B cell (primary cell): ENCODE measurements at regions of chr5 and their contacts with region 1.

Region 1: DNA sequence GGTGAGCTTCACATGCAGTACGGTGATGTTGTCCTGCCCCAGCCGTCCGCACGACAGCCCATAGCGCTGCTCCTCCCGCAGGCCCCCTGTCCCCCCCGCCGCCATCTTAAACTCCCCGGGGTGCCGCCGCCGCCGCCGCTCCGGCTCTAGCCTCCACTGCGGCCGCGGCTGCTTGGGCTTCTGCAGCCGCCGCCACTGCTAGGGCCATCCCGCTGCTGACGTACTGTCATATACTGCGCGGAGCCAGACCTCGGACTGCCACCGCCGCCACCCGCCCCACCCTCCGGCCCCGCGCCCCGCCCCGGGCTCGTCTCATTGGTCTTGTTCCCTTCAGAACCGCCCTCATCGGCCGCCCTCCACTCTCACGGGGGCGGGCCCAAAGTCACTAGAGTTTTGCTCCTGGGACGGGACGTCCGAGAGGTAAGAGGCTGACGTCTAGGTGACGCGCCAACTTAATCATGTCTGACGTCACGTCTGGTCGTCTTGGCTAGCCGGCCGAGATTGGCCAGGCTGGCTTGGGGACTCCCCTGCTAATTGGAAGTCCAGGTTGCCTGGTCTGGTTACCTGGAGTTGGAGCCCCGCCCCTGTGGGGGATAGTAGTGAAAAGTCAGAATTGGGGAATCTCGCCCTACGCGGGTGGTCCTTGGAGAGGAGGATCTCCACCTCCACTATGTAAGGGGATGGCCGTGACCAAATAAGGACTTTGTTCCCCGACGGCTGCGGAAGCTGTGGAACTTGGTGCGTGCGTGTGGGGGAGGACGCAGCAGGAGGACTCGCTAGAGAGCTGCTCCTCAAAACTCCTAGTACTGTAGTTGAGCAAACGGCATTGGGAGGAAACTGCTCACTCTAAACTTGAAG is at the start of gene ELL2:
- DNase-seq: peak; percentile 99
- ATAC-seq: peak; percentile 81
- H3K4me3 ChIP-seq: peak within 1 kb of the TSS; percentile 91 to 98 (median 92)
- H3K4me3 Mint-ChIP-seq: peak within 1 kb of the TSS; percentile 99
- H3K27ac ChIP-seq: peak within 1 kb of the TSS; percentile 92 to 99
- H3K27ac Mint-ChIP-seq: peak within 1 kb of the TSS; percentile 97
- H3K4me1 ChIP-seq: peaks cover 21 to 36% of the 10 kb centered on the region in 2 donors
- H3K4me1 Mint-ChIP-seq: peaks cover 47% of the 10 kb centered on the region
- H3K27me3 ChIP-seq: no peaks in the 10 kb centered on the region
- H3K27me3 Mint-ChIP-seq: peaks cover 2% of the 10 kb centered on the region
- CTCF ChIP-seq: no peak
- total RNA-seq, gene ELL2: 27.0 and 31.6 TPM in 2 replicates

Region 2: GRCh38 chr5:95554647-95555548 is 406.9 kb before region 1 on chr5 and contains the starts of genes ARSK and SKIC3:
- CTCF ChIA-PET with region 1: no interaction called
- POLR2A ChIA-PET with region 1: no interaction called
- intact Hi-C with region 1: loop called (anchors 2 kb)
- DNase-seq: peak; percentile 99
- ATAC-seq: peak; percentile 85
- H3K4me3 ChIP-seq: peak within 1 kb of the TSS; percentile 70 to 91 (median 81)
- H3K4me3 Mint-ChIP-seq: peak within 1 kb of the TSS; percentile 93
- H3K27ac ChIP-seq: peak within 1 kb of the TSS; percentile 71 to 80
- H3K27ac Mint-ChIP-seq: peak within 1 kb of the TSS; percentile 90
- H3K4me1 ChIP-seq: peaks cover 14 to 20% of the 10 kb centered on the region in 2 donors
- H3K4me1 Mint-ChIP-seq: peaks cover 41% of the 10 kb centered on the region
- H3K27me3 ChIP-seq: no peaks in the 10 kb centered on the region
- H3K27me3 Mint-ChIP-seq: no peaks in the 10 kb centered on the region
- CTCF ChIP-seq: peak; percentile 29
- total RNA-seq, gene ARSK: 5.1 and 5.5 TPM in 2 replicates
- total RNA-seq, gene SKIC3: 75.4 and 85.3 TPM in 2 replicates

Region 3: GRCh38 chr5:95730730-95731570 is 230.9 kb before region 1 on chr5 and contains the start of gene RHOBTB3:
- CTCF ChIA-PET with region 1: interaction called, 3 read pairs
- POLR2A ChIA-PET with region 1: no interaction called
- intact Hi-C with region 1: loop called (anchors 2 kb)
- DNase-seq: peak; percentile 61
- ATAC-seq: peak; percentile 70
- H3K4me3 ChIP-seq: peak within 1 kb of the TSS; percentile 51 to 75 (median 60)
- H3K4me3 Mint-ChIP-seq: peak within 1 kb of the TSS; percentile 90
- H3K27ac ChIP-seq: no peak within 1 kb of the TSS
- H3K27ac Mint-ChIP-seq: peak within 1 kb of the TSS; percentile 78
- H3K4me1 ChIP-seq: peaks cover 8 to 13% of the 10 kb centered on the region in 2 donors
- H3K4me1 Mint-ChIP-seq: peaks cover 29% of the 10 kb centered on the region
- H3K27me3 ChIP-seq: peaks cover 0 to 10% (median 6%) of the 10 kb centered on the region in 4 experiments
- H3K27me3 Mint-ChIP-seq: peaks cover 12% of the 10 kb centered on the region
- CTCF ChIP-seq: no peak
- total RNA-seq, gene RHOBTB3: 5.0 and 5.3 TPM in 2 replicates

Region 4: DNA sequence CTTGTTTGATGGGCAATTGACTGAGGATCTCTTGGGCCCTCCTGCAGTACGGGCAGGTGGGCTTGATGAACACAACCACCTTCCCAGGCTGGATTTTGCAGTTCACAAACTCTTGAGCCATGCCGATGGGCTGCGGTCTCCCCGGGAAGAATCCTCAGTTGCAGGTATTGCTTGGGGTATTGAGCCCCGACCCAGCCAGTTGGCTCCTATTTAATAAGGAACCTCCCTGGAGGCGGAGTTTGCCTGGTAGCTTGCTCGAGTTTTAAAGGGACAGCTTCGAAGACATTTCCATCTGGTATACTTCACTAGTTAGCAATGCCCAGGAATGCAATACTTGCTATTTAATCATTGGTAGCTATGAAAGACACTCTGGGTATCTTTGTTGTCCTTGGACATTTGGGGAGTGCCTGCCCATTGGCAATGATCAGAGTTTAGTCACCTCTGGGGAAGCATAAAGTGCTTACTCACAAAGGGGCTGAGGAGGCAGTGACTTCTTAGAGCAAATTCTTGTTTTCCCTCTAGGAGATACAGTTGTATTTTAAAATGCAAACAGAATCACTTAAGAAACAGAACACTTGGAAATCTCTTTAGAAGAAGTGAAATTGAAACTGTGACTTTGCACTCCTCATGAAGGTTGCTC is 139.2 kb before region 1 on chr5 and contains the start of gene GLRX:
- CTCF ChIA-PET with region 1: no interaction called
- POLR2A ChIA-PET with region 1: interaction called, 3 read pairs
- intact Hi-C with region 1: loop called (anchors 5 kb)
- DNase-seq: peak; percentile 63
- ATAC-seq: peak; percentile 41
- H3K4me3 ChIP-seq: peak within 1 kb of the TSS; percentile 70 to 100 (median 97)
- H3K4me3 Mint-ChIP-seq: peak within 1 kb of the TSS; percentile 99
- H3K27ac ChIP-seq: peak within 1 kb of the TSS; percentile 67 to 90
- H3K27ac Mint-ChIP-seq: peak within 1 kb of the TSS; percentile 99
- H3K4me1 ChIP-seq: peaks cover 52 to 59% of the 10 kb centered on the region in 2 donors
- H3K4me1 Mint-ChIP-seq: peaks cover 70% of the 10 kb centered on the region
- H3K27me3 ChIP-seq: no peaks in the 10 kb centered on the region
- H3K27me3 Mint-ChIP-seq: no peaks in the 10 kb centered on the region
- CTCF ChIP-seq: no peak
- total RNA-seq, gene GLRX: 44.6 and 50.0 TPM in 2 replicates

Region 5: GRCh38 chr5:95932941-95933340 is 28.9 kb before region 1 on chr5:
- CTCF ChIA-PET with region 1: no interaction called
- POLR2A ChIA-PET with region 1: interaction called, 5 read pairs
- intact Hi-C with region 1: loop called (anchors 1 kb)
- DNase-seq: no peak
- ATAC-seq: no peak
- H3K4me3 ChIP-seq: no peak overlapping the region
- H3K4me3 Mint-ChIP-seq: no peak overlapping the region
- H3K27ac ChIP-seq: no peak overlapping the region
- H3K27ac Mint-ChIP-seq: no peak overlapping the region
- H3K4me1 ChIP-seq: peaks cover 4 to 7% of the 10 kb centered on the region in 2 donors
- H3K4me1 Mint-ChIP-seq: peaks cover 16% of the 10 kb centered on the region
- H3K27me3 ChIP-seq: no peaks in the 10 kb centered on the region
- H3K27me3 Mint-ChIP-seq: no peaks in the 10 kb centered on the region
- CTCF ChIP-seq: no peak

Region 6: DNA sequence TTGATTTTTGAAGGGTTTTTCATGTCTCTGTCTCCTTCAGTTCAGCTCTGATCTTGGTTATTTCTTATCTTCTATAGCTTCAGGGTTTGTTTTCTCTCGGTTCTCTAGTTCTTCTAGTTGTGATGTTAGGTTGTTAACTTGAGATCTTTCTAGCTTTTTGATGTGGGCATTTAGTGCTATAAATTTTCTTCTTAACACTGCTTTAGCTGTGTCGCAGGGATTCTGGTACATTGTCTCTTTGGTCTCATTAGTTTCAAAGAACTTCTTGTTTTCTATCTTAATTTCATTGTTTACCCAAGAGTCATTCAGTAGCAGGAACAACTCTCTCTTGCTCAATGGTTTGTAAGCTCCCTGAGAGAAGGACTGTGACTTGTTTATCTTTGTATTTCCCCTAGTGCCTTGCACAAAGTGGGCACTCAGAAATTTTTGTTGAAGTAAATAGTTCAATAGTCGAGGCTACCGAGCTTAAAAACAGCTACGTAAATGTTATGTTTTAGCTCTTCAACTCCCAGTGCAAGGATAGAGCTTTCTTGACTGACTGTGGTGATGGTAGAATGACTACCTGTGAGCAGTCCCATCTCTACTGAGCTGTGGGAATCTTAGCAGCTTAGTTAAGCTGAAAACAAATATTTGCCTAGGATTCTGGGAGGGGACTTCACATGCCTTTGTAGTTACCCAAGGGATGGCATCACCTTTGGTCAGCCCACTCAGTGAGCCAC is 225.6 kb after region 1 on chr5:
- CTCF ChIA-PET with region 1: no interaction called
- POLR2A ChIA-PET with region 1: no interaction called
- intact Hi-C with region 1: no loop called
- DNase-seq: no peak
- ATAC-seq: no peak
- H3K4me3 ChIP-seq: no peak overlapping the region
- H3K4me3 Mint-ChIP-seq: no peak overlapping the region
- H3K27ac ChIP-seq: no peak overlapping the region
- H3K27ac Mint-ChIP-seq: no peak overlapping the region
- H3K4me1 ChIP-seq: no peaks in the 10 kb centered on the region
- H3K4me1 Mint-ChIP-seq: no peaks in the 10 kb centered on the region
- H3K27me3 ChIP-seq: peaks cover 0 to 5% (median 0%) of the 10 kb centered on the region in 4 experiments
- H3K27me3 Mint-ChIP-seq: no peaks in the 10 kb centered on the region
- CTCF ChIP-seq: no peak

Region 7: GRCh38 chr5:96662725-96663513 is 701.1 kb after region 1 on chr5:
- CTCF ChIA-PET with region 1: no interaction called
- POLR2A ChIA-PET with region 1: no interaction called
- intact Hi-C with region 1: loop called (anchors 1 kb)
- DNase-seq: peak; percentile 91
- ATAC-seq: peak; percentile 74
- H3K4me3 ChIP-seq: peak overlapping the region; percentile 60 to 89 (median 83)
- H3K4me3 Mint-ChIP-seq: peak overlapping the region; percentile 100
- H3K27ac ChIP-seq: peak overlapping the region; percentile 85 to 89
- H3K27ac Mint-ChIP-seq: peak overlapping the region; percentile 100
- H3K4me1 ChIP-seq: peaks cover 16 to 21% of the 10 kb centered on the region in 2 donors
- H3K4me1 Mint-ChIP-seq: peaks cover 53% of the 10 kb centered on the region
- H3K27me3 ChIP-seq: no peaks in the 10 kb centered on the region
- H3K27me3 Mint-ChIP-seq: no peaks in the 10 kb centered on the region
- CTCF ChIP-seq: no peak